ENCODE measurements at regions of chr3 and their contacts with region 1.

Region 1: DNA sequence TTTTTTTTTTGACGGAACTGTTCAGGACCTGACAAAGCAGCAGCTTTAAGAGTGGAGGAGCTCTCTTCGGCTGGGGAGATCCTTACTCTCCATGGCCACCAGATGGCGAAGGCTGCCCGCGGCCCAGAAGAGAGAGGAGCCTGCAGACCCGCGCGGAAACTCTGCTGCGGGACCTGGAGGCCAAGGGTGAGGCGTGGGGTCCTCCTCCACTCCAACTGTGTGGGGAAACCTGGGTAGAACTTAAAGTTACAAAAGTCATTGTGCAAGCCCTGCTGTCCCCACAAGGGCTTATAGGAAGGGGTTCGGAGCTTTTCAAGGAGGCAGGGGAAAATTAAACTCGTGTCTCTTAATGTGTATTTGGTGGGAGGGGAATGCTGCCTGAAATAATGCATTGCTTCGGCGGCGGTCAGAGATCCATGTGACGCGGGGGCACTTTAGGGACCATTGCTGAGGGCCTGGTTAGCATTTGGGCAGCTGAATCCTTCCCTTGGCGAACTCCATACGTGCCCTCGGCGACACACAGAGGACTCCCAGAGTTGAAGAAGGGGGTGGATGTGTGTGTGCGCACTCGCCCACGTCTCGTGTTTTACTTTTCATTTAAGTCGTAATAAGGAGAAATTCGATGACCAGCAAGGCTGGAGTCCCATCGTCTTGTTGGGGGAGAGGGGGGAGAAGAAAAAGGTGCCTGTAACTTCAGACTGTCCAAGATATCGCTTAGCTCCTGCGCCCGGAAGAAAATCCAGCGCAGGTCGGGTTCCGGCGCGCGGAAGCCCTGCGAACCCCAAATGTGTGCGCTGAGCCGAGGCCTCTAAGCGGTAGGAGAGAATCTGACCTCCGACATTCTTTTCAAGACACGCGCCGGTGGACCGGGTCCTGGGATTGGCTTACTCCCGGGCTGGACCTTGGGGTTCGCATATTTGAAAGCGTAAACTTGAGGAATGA is 9.7 kb downstream of the EOMES start:
- DNase-seq: peak; percentile 85
- ATAC-seq: peak; percentile 98

Region 2: GRCh38 chr3:27380433-27381357 is 331.7 kb before region 1 on chr3:
- intact Hi-C with region 1: no loop called
- DNase-seq: no peak
- ATAC-seq: no peak

Region 3: GRCh38 chr3:27659279-27660021 is 53.0 kb before region 1 on chr3:
- intact Hi-C with region 1: no loop called
- DNase-seq: peak; percentile 76
- ATAC-seq: peak; percentile 81

Region 4: DNA sequence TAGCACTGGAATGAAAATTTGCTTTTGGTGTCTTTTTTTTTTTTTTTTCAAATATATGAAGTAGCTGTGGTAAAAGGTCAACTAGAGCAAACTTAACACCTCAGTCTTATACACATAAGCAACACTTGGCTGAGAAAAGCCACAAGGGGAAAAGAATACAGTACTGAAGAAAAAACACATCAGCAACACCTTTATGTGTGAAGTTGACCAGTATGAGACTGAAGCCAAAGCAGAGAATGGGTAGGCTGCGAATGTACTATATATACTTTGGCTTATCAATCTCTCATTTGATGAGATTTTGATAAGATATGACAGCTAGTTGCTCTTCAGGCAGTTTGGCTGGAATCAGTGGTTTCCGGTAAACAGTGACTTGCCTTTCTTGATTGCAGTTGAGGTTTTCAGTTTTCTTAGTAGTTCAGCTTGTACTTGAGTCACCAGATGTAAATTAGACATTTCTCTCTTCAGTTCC is 614.1 kb after region 1 on chr3:
- intact Hi-C with region 1: loop called (anchors 2 kb)
- DNase-seq: no peak
- ATAC-seq: peak; percentile 24

Measured in Right ventricle myocardium superior (tissue), 1 donor.